ENCODE measurements at regions of chr15 and their contacts with region 1.

Region 1: GRCh38 chr15:64430000-64430735 is 30.2 kb upstream of the ZNF609 start:
- DNase-seq: peak in 2 of 4 donors; percentile 77 to 88
- ATAC-seq: peak; percentile 70
- H3K4me3 ChIP-seq: no peak overlapping the region
- H3K27ac ChIP-seq: peak overlapping the region in 1 of 2 donors; percentile 30
- H3K4me1 ChIP-seq: peaks cover 0 to 13% of the 10 kb centered on the region in 2 donors
- H3K27me3 ChIP-seq: no peaks in the 10 kb centered on the region
- CTCF ChIP-seq: no peak

Region 2: GRCh38 chr15:64651573-64652260 is 221.5 kb after region 1 on chr15:
- intact Hi-C with region 1: loop called in 1 of 2 experiments (anchors 10 kb)
- DNase-seq: no peak
- ATAC-seq: peak; percentile 81
- H3K4me3 ChIP-seq: no peak overlapping the region
- H3K27ac ChIP-seq: no peak overlapping the region
- H3K4me1 ChIP-seq: peaks cover 0 to 15% of the 10 kb centered on the region in 2 donors
- H3K27me3 ChIP-seq: no peaks in the 10 kb centered on the region
- CTCF ChIP-seq: no peak